ENCODE measurements at regions of chr3 and their contacts with region 1.

Region 1: GRCh38 chr3:169149349-169149890 is 514.1 kb downstream of the MECOM start:
- DNase-seq: peak; percentile 83
- CTCF ChIP-seq: peak; percentile 77

Region 2: DNA sequence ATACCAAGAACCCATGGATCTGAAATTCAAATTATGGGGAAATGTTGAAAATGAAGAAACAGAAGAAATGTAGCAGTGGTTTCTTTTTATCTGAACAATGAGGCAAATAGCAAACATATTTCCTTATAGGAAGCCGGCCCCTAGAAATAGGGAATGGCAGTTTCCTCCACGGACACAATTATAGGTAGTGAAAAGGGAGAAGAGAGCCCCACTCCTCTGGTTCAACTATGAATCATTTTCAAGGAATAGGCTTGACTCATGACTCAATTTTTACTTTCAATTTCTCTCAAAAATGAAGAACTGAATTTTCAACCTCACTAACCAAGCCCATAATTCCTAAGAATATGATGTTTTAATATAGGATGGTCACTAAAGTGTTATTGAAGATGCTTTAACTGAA is 271.0 kb after region 1 on chr3:
- in situ Hi-C with region 1: no loop called
- DNase-seq: no peak
- CTCF ChIP-seq: no peak

Region 3: DNA sequence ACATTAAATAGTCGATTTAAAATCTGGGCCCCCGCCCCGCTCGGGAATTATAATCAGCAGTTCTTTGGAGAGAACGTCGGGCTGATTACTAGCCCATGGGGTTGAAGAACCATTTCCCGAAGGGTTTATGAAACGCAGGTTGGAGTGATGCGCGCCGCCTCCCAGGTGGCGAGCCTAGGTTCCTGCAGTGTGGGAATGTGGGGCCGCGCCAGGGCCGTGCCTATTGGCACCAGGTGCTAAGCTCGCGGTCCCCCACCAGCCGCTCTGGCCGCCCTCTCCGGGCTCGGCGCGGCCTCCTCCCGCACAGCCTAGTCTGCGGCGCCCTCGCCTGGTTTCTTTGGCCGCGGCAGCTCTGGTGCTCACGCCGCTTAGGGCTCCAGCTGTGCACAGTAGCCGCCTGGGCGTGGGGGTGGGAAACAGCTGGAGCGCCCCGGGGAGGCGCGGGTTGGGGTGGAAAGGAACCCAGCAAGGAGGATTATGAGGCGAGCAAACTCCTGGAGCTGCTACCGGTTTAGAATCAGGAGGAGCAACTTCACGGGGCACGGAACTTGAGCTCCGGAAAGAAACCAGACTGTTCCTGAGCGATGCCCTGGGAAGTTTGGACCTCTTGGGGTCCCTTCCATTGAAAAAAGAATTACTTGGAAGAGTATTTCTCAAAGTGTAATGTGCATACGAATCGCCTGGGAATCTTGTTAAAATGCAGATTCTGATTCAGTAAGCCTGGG is 519.7 kb after region 1 on chr3:
- in situ Hi-C with region 1: loop called (anchors 25 kb)
- DNase-seq: peak; percentile 84
- CTCF ChIP-seq: peak; percentile 82